Naive thymus-derived CD4-positive, alpha-beta T cell (primary cell): ENCODE measurements at regions of chr3 and their contacts with region 1.

Region 1: GRCh38 chr3:138118612-138119422 is 3.4 kb upstream of the DZIP1L start:
- DNase-seq: peak in 6 of 9 donors; percentile 10 to 57 (median 24)
- ATAC-seq: peak; percentile 65
- H3K4me3 ChIP-seq: no peak overlapping the region
- H3K4me3 Mint-ChIP-seq: no peak overlapping the region
- H3K27ac ChIP-seq: no peak overlapping the region
- H3K27ac Mint-ChIP-seq: no peak overlapping the region
- H3K4me1 ChIP-seq: no peaks in the 10 kb centered on the region
- H3K4me1 Mint-ChIP-seq: peaks cover 2 to 13% (median 8%) of the 10 kb centered on the region in 7 donors
- H3K27me3 ChIP-seq: peaks cover 0 to 4% of the 10 kb centered on the region in 2 donors
- H3K27me3 Mint-ChIP-seq: peaks cover 19 to 58% (median 31%) of the 10 kb centered on the region in 5 donors

Region 2: DNA sequence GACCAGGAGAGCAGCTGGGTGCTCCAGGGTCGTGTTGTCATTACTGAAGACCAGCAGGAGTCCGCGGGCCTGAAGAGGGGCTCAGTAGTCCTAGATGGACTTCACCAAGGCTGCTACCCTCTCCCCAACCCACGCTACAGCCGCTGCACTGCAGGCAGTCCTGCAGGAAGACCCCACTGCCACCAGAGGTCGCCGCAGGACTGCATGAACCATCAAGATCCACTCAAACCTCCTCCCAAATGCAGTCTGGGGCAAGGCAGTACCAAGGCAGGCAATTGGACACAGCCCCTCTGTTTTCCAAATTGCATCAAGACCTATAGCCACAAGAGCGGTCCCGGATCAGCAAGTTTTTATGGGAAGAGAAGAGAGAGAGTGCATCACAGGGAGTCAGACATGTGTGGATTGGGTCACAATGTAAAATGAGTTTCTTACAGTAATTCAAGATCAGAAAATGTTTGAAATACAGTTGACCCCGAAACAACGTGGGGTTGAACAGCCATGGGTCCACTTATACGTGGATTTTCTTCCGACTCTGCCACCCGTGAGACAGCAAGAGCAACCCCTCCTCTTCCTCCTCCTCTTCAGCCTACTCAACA is 50.1 kb before region 1 on chr3:
- CTCF ChIA-PET with region 1: interaction called, 10 read pairs
- POLR2A ChIA-PET with region 1: no interaction called
- intact Hi-C with region 1: loop called (anchors 1 kb)
- DNase-seq: peak; percentile 36 to 78 (median 55)
- ATAC-seq: peak; percentile 85
- H3K4me3 ChIP-seq: no peak overlapping the region
- H3K4me3 Mint-ChIP-seq: no peak overlapping the region
- H3K27ac ChIP-seq: no peak overlapping the region
- H3K27ac Mint-ChIP-seq: no peak overlapping the region
- H3K4me1 ChIP-seq: no peaks in the 10 kb centered on the region
- H3K4me1 Mint-ChIP-seq: peaks cover 0 to 8% (median 0%) of the 10 kb centered on the region in 7 donors
- H3K27me3 ChIP-seq: no peaks in the 10 kb centered on the region
- H3K27me3 Mint-ChIP-seq: peaks cover 6 to 15% (median 12%) of the 10 kb centered on the region in 5 donors

Region 3: GRCh38 chr3:138082085-138082991 is 36.5 kb before region 1 on chr3:
- CTCF ChIA-PET with region 1: no interaction called
- POLR2A ChIA-PET with region 1: no interaction called
- intact Hi-C with region 1: loop called in 1 of 2 experiments (anchors 5 kb)
- DNase-seq: peak in 1 of 9 donors; percentile 3
- ATAC-seq: no peak
- H3K4me3 ChIP-seq: no peak overlapping the region
- H3K4me3 Mint-ChIP-seq: peak overlapping the region in 8 of 10 donors; percentile 1 to 69 (median 40)
- H3K27ac ChIP-seq: no peak overlapping the region
- H3K27ac Mint-ChIP-seq: peak overlapping the region in 3 of 9 donors; percentile 60 to 77 (median 62)
- H3K4me1 ChIP-seq: peaks cover 0 to 4% of the 10 kb centered on the region in 2 donors
- H3K4me1 Mint-ChIP-seq: peaks cover 0 to 30% (median 18%) of the 10 kb centered on the region in 7 donors
- H3K27me3 ChIP-seq: no peaks in the 10 kb centered on the region
- H3K27me3 Mint-ChIP-seq: peaks cover 0 to 13% (median 5%) of the 10 kb centered on the region in 5 donors

Region 4: GRCh38 chr3:139088462-139089324 is 969.9 kb after region 1 on chr3:
- CTCF ChIA-PET with region 1: no interaction called
- POLR2A ChIA-PET with region 1: no interaction called
- intact Hi-C with region 1: no loop called
- DNase-seq: no peak
- ATAC-seq: no peak
- H3K4me3 ChIP-seq: no peak overlapping the region
- H3K4me3 Mint-ChIP-seq: no peak overlapping the region
- H3K27ac ChIP-seq: no peak overlapping the region
- H3K27ac Mint-ChIP-seq: no peak overlapping the region
- H3K4me1 ChIP-seq: no peaks in the 10 kb centered on the region
- H3K4me1 Mint-ChIP-seq: no peaks in the 10 kb centered on the region
- H3K27me3 ChIP-seq: no peaks in the 10 kb centered on the region
- H3K27me3 Mint-ChIP-seq: peaks cover 4 to 20% (median 18%) of the 10 kb centered on the region in 5 donors